Activated CD4-positive, alpha-beta T cell treated with anti-CD3 and anti-CD28 coated beads, Interleukin-2, amount 10 ng/mL, durations not matched to agents 24 days and 14 days (primary cell): ENCODE measurements at regions of chr4 and their contacts with region 1.

Region 1: DNA sequence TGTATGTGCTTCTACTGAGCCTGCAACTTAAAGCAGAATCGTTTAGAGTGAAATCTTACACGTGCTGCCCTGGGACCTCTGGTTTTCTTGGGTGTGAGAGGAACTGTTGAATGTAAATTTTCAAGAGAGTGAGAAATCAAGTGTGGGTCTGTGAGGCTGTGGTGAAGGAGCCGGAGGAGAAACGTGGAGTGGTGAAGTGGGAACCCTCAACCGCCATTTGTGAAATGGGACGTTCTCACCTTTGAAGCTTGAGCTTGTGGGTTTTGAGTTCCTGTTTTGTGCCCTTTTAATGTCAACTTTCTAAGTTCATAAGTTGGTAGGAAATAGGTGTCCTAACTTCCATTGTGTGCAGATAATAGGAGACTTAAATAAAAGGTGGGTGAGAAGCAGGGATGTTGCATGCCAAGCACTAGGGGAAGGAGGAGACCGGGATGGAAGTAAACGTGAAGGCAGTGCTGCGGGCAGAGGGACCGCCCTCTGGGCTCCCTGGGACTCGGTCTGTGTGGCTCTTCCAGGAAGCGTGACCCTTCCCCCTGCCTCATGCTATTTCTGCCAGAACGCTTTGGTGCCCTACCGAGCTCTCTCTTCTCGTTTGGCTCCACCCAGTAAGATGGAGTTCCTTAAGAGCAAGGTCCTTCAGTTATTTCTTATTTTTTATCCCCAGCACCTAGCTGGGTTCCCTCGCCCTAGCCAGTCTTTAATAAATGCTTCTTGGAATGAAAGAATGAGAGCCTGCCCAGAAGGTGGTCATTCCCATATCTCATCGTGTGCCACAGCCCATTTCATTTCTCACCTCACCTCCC is 56.0 kb downstream of the TMEM131L start:
- DNase-seq: peak; percentile 87
- H3K4me3 Mint-ChIP-seq: peak overlapping the region; percentile 75
- H3K27ac Mint-ChIP-seq: peak overlapping the region; percentile 95
- H3K4me1 Mint-ChIP-seq: peaks cover 83% of the 10 kb centered on the region
- H3K27me3 Mint-ChIP-seq: no peaks in the 10 kb centered on the region

Region 2: DNA sequence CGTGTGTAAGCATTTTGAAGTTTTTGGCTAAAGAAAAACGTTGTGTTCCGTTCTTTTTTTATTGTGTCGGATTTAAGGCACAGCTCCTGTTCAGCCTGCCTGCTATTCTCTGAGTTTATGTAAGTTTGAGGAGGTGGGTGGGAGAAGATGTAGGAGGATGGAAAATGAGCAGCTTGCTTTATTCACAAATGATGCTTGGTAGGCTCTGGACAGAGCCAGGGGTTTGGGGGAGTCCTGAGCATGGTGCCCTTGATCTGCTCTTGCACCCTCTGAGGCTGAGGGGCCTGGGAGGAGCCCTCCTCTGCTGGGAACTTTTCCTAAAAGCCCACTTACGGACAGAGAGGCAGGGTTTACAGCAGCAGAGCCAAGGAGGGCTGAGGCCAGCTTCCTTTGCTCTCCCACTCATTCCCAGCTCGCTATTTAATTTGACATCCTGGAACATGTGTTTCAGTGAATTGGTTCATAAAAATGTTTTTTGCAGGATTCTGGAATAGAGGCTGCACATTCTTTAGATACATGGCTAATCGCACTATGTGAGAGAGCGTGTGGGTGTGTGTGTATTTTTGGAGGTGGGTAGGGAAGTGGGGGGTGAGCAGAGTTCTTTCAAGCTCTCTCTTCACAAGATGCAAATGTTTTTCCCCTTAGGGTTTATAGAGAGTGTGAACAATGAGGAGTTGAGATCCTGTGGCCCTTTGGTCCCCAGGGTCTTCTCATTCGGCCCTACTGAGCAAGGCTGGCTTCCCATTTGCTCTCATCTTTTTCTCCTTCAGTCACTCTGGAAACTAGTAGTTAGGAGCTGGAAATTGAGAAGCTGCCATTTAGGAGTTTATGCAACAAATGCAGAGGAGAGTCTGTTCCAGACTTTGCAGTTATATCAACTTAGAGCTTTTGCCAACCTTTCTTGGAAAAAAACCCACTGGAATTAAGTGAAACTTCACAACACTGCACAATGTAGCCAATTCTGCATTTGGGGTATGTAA is 23.9 kb before region 1 on chr4:
- intact Hi-C with region 1: loop called (anchors 1 kb)
- DNase-seq: peak; percentile 61
- H3K4me3 Mint-ChIP-seq: peak overlapping the region; percentile 80
- H3K27ac Mint-ChIP-seq: peak overlapping the region; percentile 94
- H3K4me1 Mint-ChIP-seq: peaks cover 76% of the 10 kb centered on the region
- H3K27me3 Mint-ChIP-seq: no peaks in the 10 kb centered on the region

Region 3: DNA sequence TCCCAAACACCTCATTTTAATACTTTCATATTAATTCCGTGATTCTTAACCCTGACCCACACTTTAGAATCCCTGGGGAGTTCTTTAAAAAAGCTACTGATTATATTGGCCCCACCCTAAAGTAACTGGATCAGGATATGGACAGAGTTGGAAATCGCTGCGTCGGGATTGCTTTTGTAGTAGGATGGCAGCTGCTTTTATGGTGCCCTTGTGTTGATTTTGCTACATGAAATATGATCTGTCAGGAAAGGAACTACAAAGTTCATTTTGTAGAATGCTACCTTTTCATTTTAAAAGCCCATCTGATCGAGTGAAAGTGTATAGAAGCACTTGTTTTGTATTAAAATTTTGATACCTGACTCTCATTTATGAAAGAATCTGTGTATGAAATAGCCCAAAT is 12.5 kb before region 1 on chr4:
- intact Hi-C with region 1: loop called (anchors 1 kb)
- DNase-seq: no peak
- H3K4me3 Mint-ChIP-seq: no peak overlapping the region
- H3K27ac Mint-ChIP-seq: no peak overlapping the region
- H3K4me1 Mint-ChIP-seq: peaks cover 32% of the 10 kb centered on the region
- H3K27me3 Mint-ChIP-seq: no peaks in the 10 kb centered on the region

Region 4: GRCh38 chr4:153541456-153542096 is 19.4 kb after region 1 on chr4:
- intact Hi-C with region 1: loop called (anchors 1 kb)
- DNase-seq: peak; percentile 73
- H3K4me3 Mint-ChIP-seq: no peak overlapping the region
- H3K27ac Mint-ChIP-seq: peak overlapping the region; percentile 17
- H3K4me1 Mint-ChIP-seq: peaks cover 39% of the 10 kb centered on the region
- H3K27me3 Mint-ChIP-seq: no peaks in the 10 kb centered on the region